OCI-LY7 (cell line): ENCODE measurements at regions of chr17 and their contacts with region 1.

Region 1: GRCh38 chr17:19513897-19514488 is 19.7 kb upstream of the SLC47A1 start:
- DNase-seq: peak; percentile 74
- H3K4me3 ChIP-seq: no peak overlapping the region
- H3K27ac ChIP-seq: no peak overlapping the region
- H3K4me1 ChIP-seq: peaks cover 30% of the 10 kb centered on the region
- CTCF ChIP-seq: peak; percentile 99

Region 2: DNA sequence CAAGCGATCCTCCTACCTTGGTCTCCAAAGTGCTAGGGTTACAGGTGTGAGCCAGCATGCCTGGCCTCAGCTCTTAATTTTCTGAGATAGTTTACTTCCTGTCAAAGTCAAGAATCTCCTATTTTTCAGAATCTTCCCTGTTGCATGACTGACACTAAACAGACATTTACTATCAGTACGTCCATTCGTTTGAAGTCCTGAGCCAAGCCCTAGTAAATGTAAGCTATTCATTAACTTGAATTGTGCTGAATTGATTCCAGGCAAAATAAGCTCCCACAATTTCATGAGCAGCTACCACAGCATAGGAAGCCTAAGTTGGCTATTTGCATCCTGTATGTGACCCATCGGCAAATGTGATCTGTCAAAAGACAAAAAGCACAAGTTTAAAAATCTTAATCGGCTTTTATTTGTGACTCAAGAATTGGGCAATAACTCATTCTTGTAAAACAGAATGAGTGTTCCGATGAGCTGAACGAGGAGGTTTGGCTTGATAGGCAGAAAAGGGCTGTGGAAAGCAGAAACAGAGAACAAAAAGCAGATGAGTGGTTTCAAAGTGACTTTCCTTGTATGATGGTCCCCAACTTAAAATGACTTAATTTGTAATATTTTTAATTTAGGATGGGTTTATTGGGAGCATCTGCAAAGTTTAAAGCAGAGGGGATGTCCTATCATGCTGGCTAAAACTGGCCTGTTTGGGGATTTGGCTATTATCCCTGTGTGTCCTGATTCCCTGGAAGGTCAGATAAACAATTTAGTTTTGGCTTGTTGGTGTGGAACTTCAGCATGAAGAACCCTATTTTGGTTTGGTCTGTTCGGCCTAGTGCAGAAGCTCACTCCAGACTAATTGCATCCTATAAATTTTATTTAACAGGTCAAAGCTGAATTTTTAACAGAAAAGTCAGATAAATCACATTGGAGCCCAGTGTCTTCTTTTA is 88.8 kb before region 1 on chr17:
- CTCF ChIA-PET with region 1: no interaction called
- POLR2A ChIA-PET with region 1: no interaction called
- intact Hi-C with region 1: no loop called
- DNase-seq: no peak
- H3K4me3 ChIP-seq: no peak overlapping the region
- H3K27ac ChIP-seq: no peak overlapping the region
- H3K4me1 ChIP-seq: no peaks in the 10 kb centered on the region
- CTCF ChIP-seq: no peak

Region 3: DNA sequence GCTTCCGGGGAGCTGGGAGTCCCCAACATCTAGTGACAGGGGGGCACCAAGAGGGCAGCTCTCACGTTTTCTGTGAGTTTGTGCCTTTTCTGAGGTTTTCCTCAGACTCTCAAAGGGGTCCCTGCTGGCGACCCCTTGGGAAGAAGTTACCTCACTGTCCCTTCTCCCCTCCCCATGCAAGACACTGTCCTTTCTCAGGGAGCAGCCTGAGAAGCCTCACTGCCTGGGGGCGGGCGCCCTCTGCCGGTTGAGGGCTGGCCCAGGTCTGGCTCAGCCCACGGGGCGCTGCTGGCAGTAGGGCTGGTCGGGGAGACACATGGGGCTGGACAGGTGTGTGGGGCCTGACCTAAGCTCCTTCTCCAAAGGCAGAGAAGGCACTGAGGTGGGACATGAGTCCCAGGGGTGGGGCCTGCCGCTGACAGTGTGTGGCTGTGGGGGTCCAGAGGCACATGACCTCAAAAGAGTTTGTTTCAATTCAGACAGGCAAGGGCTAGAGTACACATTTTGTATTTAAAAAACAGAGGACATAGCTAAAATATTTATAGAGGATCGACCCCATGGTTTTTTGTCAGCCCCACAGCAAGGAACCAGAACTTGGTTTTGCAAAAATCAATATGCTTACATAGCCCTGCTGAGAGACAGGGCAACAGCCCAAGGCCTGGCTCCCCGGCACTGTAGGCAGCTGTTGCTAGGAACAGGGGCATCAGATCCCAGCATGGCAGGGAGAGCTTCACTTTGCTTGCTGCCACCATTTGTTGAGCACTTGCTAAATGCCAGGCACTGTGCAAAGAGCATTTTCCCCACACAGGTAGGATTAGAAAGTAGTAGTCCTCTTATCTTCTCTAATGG is 252.7 kb after region 1 on chr17:
- CTCF ChIA-PET with region 1: interaction called, 3 read pairs
- POLR2A ChIA-PET with region 1: interaction called, 3 read pairs
- intact Hi-C with region 1: loop called (anchors 1 kb)
- DNase-seq: peak; percentile 80
- H3K4me3 ChIP-seq: no peak overlapping the region
- H3K27ac ChIP-seq: no peak overlapping the region
- H3K4me1 ChIP-seq: peaks cover 24% of the 10 kb centered on the region
- CTCF ChIP-seq: peak; percentile 97